ENCODE measurements at regions of chr20 and their contacts with region 1.

Region 1: DNA sequence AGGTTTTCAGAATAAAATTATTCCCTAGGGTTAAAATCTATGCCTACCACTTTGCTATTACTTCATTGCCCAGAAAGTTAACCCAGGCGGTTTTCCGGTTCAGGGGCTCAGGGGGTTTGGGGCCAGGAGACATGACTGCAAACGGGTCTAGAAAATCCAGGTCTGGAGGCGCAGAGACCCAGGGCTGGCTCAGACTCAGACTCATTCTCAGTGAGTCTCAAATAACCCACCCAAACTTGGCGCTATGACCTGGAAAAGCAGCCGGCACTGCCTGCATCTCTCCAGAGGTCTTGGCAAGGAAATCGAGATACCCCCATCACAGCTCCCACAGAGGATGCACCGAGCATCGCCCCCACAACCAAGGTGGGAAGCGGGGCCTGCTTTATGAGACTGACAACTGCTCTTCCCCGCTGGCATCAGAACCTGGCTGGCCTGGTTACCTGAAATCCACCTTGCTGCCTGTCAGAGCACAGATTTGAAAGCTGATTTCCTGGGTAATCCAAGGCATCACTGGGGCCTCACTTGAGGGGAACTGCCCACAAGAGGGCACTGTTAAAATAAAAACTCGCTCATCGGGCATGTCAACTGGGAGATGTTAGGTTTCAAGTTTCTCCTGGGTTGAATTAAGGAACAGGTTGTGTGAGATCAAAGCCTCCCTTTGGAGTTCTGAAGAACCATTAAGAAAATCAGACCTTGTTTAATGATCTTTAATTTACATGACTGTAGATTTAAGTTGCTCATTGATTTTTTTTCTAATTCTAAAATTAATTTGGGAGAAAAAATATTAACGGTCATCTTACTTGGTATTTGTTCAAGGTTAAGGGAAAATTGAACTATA is 55.1 kb downstream of the KIF16B start:
- DNase-seq: peak in 5 of 9 donors; percentile 10 to 29 (median 20)
- ATAC-seq: no peak
- H3K4me3 ChIP-seq: no peak overlapping the region
- H3K4me3 Mint-ChIP-seq: no peak overlapping the region
- H3K27ac ChIP-seq: no peak overlapping the region
- H3K27ac Mint-ChIP-seq: no peak overlapping the region
- H3K4me1 ChIP-seq: no peaks in the 10 kb centered on the region
- H3K4me1 Mint-ChIP-seq: peaks cover 0 to 12% (median 3%) of the 10 kb centered on the region in 7 donors
- H3K27me3 ChIP-seq: no peaks in the 10 kb centered on the region
- H3K27me3 Mint-ChIP-seq: no peaks in the 10 kb centered on the region

Region 2: GRCh38 chr20:16257021-16257420 is 261.1 kb before region 1 on chr20:
- CTCF ChIA-PET with region 1: no interaction called
- POLR2A ChIA-PET with region 1: no interaction called
- intact Hi-C with region 1: no loop called
- DNase-seq: no peak
- ATAC-seq: no peak
- H3K4me3 ChIP-seq: no peak overlapping the region
- H3K4me3 Mint-ChIP-seq: no peak overlapping the region
- H3K27ac ChIP-seq: no peak overlapping the region
- H3K27ac Mint-ChIP-seq: no peak overlapping the region
- H3K4me1 ChIP-seq: no peaks in the 10 kb centered on the region
- H3K4me1 Mint-ChIP-seq: no peaks in the 10 kb centered on the region
- H3K27me3 ChIP-seq: no peaks in the 10 kb centered on the region
- H3K27me3 Mint-ChIP-seq: peaks cover 0 to 11% (median 3%) of the 10 kb centered on the region in 5 donors

Region 3: GRCh38 chr20:16491294-16491914 is 26.8 kb before region 1 on chr20:
- CTCF ChIA-PET with region 1: no interaction called
- POLR2A ChIA-PET with region 1: no interaction called
- intact Hi-C with region 1: no loop called
- DNase-seq: no peak
- ATAC-seq: peak; percentile 38
- H3K4me3 ChIP-seq: no peak overlapping the region
- H3K4me3 Mint-ChIP-seq: no peak overlapping the region
- H3K27ac ChIP-seq: no peak overlapping the region
- H3K27ac Mint-ChIP-seq: no peak overlapping the region
- H3K4me1 ChIP-seq: no peaks in the 10 kb centered on the region
- H3K4me1 Mint-ChIP-seq: no peaks in the 10 kb centered on the region
- H3K27me3 ChIP-seq: no peaks in the 10 kb centered on the region
- H3K27me3 Mint-ChIP-seq: no peaks in the 10 kb centered on the region

Region 4: DNA sequence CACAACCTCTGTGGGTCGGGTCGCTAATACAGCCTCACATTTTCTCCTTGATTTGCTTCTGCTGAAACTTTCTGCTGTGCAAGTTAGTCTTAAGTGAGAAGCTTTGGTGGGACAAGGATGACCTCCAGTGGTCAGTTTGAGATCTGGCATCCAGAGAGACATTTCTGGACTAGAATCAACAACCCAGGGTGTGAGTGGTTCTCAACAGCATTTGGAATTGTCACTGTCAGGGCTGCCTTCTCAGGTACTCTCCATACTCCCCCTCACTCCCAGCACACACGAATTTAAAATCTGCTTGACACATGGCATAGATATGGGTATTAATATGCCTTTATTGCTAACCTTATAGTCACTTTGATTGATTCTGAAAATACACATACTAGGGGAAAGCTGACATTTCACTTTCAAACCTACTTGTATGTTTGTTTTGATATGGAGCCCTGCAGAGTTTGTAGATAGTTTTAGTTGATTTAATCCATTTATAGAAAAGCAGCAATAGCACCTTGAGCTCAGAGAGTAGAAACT is 243.2 kb after region 1 on chr20:
- CTCF ChIA-PET with region 1: interaction called, 7 read pairs
- POLR2A ChIA-PET with region 1: no interaction called
- intact Hi-C with region 1: loop called in 1 of 2 experiments (anchors 1 kb)
- DNase-seq: peak; percentile 7 to 58 (median 53)
- ATAC-seq: peak; percentile 71
- H3K4me3 ChIP-seq: no peak overlapping the region
- H3K4me3 Mint-ChIP-seq: no peak overlapping the region
- H3K27ac ChIP-seq: no peak overlapping the region
- H3K27ac Mint-ChIP-seq: no peak overlapping the region
- H3K4me1 ChIP-seq: no peaks in the 10 kb centered on the region
- H3K4me1 Mint-ChIP-seq: peaks cover 0 to 4% (median 0%) of the 10 kb centered on the region in 7 donors
- H3K27me3 ChIP-seq: no peaks in the 10 kb centered on the region
- H3K27me3 Mint-ChIP-seq: peaks cover 13 to 28% (median 25%) of the 10 kb centered on the region in 5 donors